ENCODE measurements at regions of chr16 and their contacts with region 1.

Region 1: GRCh38 chr16:1794221-1794860 is 836 bp upstream of the IGFALS start:
- DNase-seq: no peak
- H3K4me3 ChIP-seq: no peak overlapping the region
- H3K27ac ChIP-seq: no peak overlapping the region
- H3K4me1 ChIP-seq: no peaks in the 10 kb centered on the region
- H3K27me3 ChIP-seq: no peaks in the 10 kb centered on the region
- CTCF ChIP-seq: no peak
- EP300 ChIP-seq: no peak
- POLR2A ChIP-seq: no peak
- RAD21 ChIP-seq: no peak

Region 2: DNA sequence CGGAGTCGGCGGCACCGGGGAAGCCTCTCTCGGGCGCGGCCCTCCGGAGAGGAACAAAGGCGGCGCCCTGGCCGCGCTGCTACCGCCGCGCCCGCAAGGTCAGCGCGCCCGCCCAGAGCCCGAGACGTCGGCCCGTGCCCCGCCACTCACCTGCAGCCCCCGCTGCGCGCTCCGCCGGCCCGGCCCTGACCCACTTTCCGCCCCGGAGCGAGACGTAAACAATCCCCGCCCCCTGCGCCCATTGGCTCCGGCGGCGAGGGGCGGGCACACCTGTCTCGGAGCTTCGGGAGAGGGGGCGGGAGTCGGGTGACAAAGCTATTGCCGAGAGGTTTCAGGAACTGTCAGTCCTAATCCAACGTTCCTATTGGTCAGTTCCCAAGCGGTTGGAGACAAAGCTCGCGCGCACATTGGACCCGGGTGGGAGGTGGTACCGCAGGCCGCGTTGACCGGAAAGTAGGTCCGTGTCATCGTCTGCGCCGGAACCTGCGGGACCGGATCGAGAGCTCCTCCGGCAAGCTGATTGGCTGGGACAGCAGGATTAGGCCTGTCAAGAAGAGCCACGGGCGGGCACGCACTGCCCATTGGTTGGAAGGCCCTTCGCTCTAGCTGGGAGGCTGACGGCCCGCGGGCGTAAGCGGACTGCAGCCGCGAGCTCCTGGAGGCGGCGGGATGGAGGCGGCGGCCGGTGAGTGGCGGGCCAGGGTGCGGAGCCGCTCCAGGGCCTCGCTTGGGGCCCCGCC is 11.8 kb before region 1 on chr16 and contains the starts of genes NUBP2 and SPSB3:
- CTCF ChIA-PET with region 1: interaction called, 6 read pairs
- POLR2A ChIA-PET with region 1: interaction called, 26 read pairs
- DNase-seq: peak; percentile 94 to 100
- H3K4me3 ChIP-seq: peak within 1 kb of the TSS; percentile 88 to 98 (median 92)
- H3K27ac ChIP-seq: peak within 1 kb of the TSS; percentile 39; the same call in 1 of the 2 replicates
- H3K4me1 ChIP-seq: peaks cover 0 to 7% (median 4%) of the 10 kb centered on the region in 4 experiments; a peak in 5 of 7 replicates
- H3K27me3 ChIP-seq: no peaks in the 10 kb centered on the region
- CTCF ChIP-seq: no peak
- EP300 ChIP-seq: peak in 1 of 2 experiments; percentile 3; a peak in 1 of 3 replicates
- POLR2A ChIP-seq: no peak; a peak in 1 of 3 replicates
- RAD21 ChIP-seq: no peak
- total RNA-seq, gene NUBP2: 68.0 and 70.3 TPM in 2 replicates
- total RNA-seq, gene SPSB3: 22.5 and 25.3 TPM in 2 replicates

Measured in H1 (cell line).